CD4-positive, alpha-beta T cell (primary cell): ENCODE measurements at regions of chr1 and their contacts with region 1.

Region 1: DNA sequence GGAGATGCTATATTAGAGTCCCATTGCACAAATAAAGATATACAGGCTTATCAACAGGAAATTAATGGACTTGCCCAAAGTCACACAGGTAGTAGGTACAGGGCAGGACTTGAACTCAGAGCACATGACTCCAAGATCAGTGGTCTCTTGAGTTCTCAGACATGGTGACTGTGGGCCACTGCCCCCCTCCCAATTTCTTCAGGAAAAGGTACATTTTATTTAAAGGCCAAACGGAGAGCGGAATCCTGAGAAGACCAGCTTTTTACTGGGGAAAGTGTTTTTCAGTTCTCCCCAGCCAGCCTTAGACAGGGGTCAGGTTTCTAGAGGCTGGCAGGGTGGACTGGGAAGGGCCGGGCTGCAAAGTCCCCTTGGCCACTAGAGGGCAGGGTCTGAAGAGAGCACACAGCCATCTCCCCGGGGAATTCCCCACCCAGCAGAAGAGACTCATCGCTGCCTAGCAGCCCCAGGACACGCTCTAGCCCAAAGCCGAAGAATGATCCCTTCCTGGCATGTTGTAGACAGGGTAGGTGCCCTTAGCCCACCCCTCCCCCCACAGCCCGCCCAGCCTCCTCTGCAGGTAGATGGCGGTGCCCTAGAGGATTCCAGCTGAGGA is 29.7 kb downstream of the ACP6 start:
- DNase-seq: peak; percentile 57 to 92 (median 68)
- ATAC-seq: peak; percentile 100
- H3K4me3 ChIP-seq: no peak overlapping the region
- H3K4me3 Mint-ChIP-seq: no peak overlapping the region
- H3K27ac ChIP-seq: no peak overlapping the region
- H3K27ac Mint-ChIP-seq: peak overlapping the region; percentile 31
- H3K4me1 ChIP-seq: peaks cover 20% of the 10 kb centered on the region
- H3K4me1 Mint-ChIP-seq: peaks cover 29% of the 10 kb centered on the region
- H3K27me3 ChIP-seq: no peaks in the 10 kb centered on the region
- H3K27me3 Mint-ChIP-seq: no peaks in the 10 kb centered on the region
- CTCF ChIP-seq: peak; percentile 79

Region 2: DNA sequence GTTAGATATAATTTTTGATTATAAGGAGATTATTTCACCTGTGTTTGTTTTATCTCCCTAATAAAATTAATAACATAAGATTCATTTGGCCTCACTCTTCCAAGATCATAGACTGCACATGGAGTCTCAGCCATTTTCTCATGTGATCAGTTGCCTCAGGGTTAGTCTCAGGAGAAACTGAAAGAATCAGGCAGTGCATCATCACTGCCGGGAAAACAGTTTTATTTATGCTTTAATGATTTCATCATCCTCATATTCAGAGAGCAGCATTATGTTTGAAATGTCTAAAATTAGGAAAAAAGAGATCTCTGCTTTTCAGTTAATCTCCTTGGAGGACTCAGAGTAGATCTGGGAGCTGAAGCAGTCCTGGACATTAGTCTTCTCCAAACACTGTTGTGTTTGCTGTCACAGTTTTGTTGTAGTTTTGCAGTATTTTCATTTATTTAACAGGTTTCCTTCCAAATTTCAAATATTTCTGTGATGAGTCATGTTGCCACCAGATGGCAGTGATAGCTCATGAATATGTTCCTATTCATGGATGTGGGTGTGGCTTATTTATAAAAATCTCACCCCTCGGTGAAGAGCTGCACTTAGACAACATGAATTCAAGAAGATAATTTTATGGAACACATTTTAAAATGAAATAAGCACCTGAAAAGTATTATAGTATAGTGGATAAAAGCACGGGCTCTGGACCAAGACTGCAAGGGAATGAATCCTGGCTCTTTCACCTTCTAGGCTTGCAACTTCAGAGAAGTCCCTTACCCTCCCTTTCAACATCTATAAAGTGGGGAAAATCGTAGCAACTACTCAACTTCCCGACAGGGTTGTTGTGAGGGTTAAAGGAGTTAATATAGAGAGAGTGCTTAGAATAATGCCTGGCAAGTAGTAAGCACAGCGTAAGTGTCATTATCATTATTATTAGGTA is 367.0 kb before region 1 on chr1:
- CTCF ChIA-PET with region 1: no interaction called
- POLR2A ChIA-PET with region 1: no interaction called
- intact Hi-C with region 1: loop called in 1 of 2 experiments (anchors 10 kb)
- DNase-seq: peak in 6 of 14 experiments; percentile 0 to 71 (median 46)
- ATAC-seq: peak; percentile 68
- H3K4me3 ChIP-seq: no peak overlapping the region
- H3K4me3 Mint-ChIP-seq: no peak overlapping the region
- H3K27ac ChIP-seq: no peak overlapping the region
- H3K27ac Mint-ChIP-seq: no peak overlapping the region
- H3K4me1 ChIP-seq: no peaks in the 10 kb centered on the region
- H3K4me1 Mint-ChIP-seq: no peaks in the 10 kb centered on the region
- H3K27me3 ChIP-seq: no peaks in the 10 kb centered on the region
- H3K27me3 Mint-ChIP-seq: no peaks in the 10 kb centered on the region
- CTCF ChIP-seq: peak; percentile 76

Region 3: DNA sequence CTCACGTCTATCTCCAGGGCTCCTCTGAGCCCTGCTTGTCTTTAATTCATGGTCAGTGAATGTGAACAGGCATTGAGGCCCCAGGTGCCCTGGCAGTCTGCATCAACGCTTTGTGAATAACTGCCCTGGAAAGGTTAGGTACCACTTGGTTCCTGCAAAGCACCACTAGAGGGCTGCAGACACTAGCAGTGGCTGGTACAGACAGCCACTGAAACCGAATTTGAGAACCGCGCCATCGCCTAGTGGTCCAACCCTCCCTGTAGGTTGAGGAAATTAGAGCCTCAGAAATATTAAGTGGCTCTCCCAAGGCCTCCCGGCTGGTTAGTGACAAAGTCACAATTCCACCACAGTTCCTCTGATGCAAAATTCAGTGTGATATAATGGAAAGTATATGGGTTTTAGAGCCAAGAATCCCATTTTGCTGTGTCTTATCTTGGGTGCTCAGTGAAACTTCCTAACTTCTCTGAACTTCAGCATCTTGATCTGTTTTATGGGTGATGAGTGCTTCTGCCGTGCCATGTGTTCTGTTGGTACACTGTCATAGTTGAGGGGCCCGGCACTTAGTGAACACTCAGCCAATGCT is 145.6 kb before region 1 on chr1:
- CTCF ChIA-PET with region 1: no interaction called
- POLR2A ChIA-PET with region 1: no interaction called
- intact Hi-C with region 1: loop called (anchors 1 kb)
- DNase-seq: peak; percentile 50 to 85 (median 64)
- ATAC-seq: peak; percentile 96
- H3K4me3 ChIP-seq: no peak overlapping the region
- H3K4me3 Mint-ChIP-seq: no peak overlapping the region
- H3K27ac ChIP-seq: no peak overlapping the region
- H3K27ac Mint-ChIP-seq: no peak overlapping the region
- H3K4me1 ChIP-seq: peaks cover 6% of the 10 kb centered on the region
- H3K4me1 Mint-ChIP-seq: no peaks in the 10 kb centered on the region
- H3K27me3 ChIP-seq: no peaks in the 10 kb centered on the region
- H3K27me3 Mint-ChIP-seq: peaks cover 12% of the 10 kb centered on the region
- CTCF ChIP-seq: peak; percentile 96

Region 4: DNA sequence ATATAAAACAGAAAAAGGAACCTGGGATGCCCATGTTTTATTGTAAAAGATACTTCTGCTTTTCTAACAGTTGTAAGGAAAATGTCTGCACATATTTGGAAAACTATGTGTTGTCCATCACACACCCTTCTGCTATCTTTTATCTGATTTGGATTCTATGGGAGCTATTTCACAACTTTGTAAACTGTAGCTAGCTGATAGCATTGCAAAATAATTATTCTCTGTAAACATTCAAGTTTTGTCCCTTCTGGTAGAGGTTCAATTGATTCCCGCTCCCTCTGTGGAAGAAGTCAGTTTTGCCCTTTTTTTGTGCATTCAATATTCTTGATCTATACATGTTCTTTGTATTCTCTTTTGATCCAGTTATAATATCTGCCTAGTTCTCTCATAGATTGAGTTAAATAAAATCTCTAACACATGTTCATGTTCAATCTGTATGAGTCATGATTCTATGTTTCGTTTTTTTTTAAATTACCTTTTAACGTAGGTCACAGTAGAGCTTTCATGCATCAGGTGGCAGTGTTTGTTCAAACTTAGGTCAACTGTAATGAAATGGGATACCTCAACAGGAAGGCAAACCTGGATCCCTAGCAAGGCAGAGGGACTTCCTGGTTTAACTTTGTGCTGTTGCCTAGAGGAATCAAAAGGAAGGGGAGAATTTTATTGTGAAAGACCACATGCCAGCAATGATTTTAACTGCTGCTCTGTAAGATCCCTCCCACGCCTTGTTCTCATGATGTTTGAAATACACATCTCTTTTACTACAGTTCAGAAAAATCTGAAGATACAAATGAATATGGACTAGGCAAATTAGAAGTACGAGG is 125.4 kb before region 1 on chr1:
- CTCF ChIA-PET with region 1: interaction called, 4 read pairs
- POLR2A ChIA-PET with region 1: no interaction called
- intact Hi-C with region 1: loop called (anchors 2 to 5 kb)
- DNase-seq: peak in 4 of 14 experiments; percentile 34 to 55 (median 45)
- ATAC-seq: peak; percentile 70
- H3K4me3 ChIP-seq: no peak overlapping the region
- H3K4me3 Mint-ChIP-seq: no peak overlapping the region
- H3K27ac ChIP-seq: no peak overlapping the region
- H3K27ac Mint-ChIP-seq: no peak overlapping the region
- H3K4me1 ChIP-seq: no peaks in the 10 kb centered on the region
- H3K4me1 Mint-ChIP-seq: peaks cover 7% of the 10 kb centered on the region
- H3K27me3 ChIP-seq: no peaks in the 10 kb centered on the region
- H3K27me3 Mint-ChIP-seq: no peaks in the 10 kb centered on the region
- CTCF ChIP-seq: peak; percentile 67

Region 5: DNA sequence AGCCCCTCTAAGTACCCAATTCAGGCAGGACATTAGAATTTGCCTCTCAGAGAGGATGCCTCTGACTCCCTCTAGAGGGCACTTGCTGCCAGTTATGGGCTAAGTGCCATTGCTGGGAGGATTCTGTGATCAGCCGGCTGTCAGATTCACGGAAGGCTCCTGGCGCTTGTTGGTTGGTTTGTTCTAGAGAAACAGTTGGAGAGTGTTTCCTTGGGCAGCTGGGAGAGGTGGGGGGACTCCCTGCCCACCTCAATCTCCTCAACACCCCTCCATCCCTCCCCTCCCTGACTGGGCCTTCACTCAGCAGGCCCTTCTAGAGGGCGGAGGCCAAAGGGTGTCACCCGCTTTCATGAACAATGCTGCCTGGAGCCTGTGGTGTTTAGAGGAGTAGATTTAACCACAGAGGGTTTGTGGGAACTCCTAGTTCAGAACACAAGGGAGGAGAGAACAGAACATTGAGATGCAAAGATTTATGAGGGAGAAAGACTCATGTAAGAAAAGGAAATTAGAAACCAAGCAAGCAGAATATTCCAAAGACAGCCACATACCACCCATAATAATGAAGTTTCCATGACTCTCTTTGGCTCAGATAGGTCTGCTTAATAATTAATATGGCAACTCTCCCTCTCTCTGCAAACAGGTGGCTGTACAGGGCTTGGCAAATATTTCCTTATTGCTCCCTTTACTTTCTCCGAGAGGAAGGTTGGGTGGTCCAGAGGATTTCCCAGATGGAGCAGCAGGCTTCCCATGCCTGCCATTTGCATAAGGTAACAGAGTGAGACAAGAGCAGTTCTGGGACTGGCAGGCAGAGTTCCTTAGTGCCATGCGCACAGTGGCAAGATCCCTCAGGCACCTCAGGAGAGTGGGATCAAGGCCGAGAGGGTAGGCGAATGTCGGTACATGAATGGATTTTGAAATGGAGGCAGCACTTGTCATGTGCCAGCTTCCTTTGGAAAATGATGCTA is 59.7 kb after region 1 on chr1:
- CTCF ChIA-PET with region 1: interaction called, 4 read pairs
- POLR2A ChIA-PET with region 1: no interaction called
- intact Hi-C with region 1: loop called (anchors 1 to 2 kb)
- DNase-seq: peak; percentile 36 to 79 (median 50)
- ATAC-seq: peak; percentile 92
- H3K4me3 ChIP-seq: peak overlapping the region; percentile 27
- H3K4me3 Mint-ChIP-seq: peak overlapping the region; percentile 46
- H3K27ac ChIP-seq: peak overlapping the region in 1 of 2 donors; percentile 35
- H3K27ac Mint-ChIP-seq: peak overlapping the region; percentile 62
- H3K4me1 ChIP-seq: peaks cover 14% of the 10 kb centered on the region
- H3K4me1 Mint-ChIP-seq: peaks cover 15% of the 10 kb centered on the region
- H3K27me3 ChIP-seq: peaks cover 0 to 6% of the 10 kb centered on the region in 2 experiments
- H3K27me3 Mint-ChIP-seq: peaks cover 19% of the 10 kb centered on the region
- CTCF ChIP-seq: peak; percentile 92

Region 6: DNA sequence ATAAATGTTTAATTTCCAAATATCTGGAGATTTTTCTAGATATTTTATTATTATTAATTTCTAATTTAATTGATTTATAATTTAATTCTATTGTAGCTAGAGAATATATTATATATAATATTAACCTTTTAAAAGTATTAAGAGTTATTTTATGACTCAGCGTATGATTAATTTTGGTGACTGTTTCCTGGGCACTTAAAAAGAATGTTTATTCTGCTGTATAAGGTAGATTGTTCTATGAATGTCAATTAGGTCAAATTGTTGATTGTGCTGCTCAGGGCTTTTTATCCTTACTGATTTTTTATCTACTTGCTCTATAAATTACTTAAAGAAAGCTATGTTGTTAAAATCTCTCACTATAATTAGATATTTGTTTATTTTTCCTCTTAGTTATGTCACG is 241.9 kb after region 1 on chr1:
- CTCF ChIA-PET with region 1: no interaction called
- POLR2A ChIA-PET with region 1: no interaction called
- intact Hi-C with region 1: no loop called
- DNase-seq: no peak
- ATAC-seq: no peak
- H3K4me3 ChIP-seq: no peak overlapping the region
- H3K4me3 Mint-ChIP-seq: no peak overlapping the region
- H3K27ac ChIP-seq: no peak overlapping the region
- H3K27ac Mint-ChIP-seq: no peak overlapping the region
- H3K4me1 ChIP-seq: no peaks in the 10 kb centered on the region
- H3K4me1 Mint-ChIP-seq: no peaks in the 10 kb centered on the region
- H3K27me3 ChIP-seq: no peaks in the 10 kb centered on the region
- H3K27me3 Mint-ChIP-seq: peaks cover 13% of the 10 kb centered on the region
- CTCF ChIP-seq: no peak